ENCODE measurements at regions of chr21 and their contacts with region 1.

Region 1: DNA sequence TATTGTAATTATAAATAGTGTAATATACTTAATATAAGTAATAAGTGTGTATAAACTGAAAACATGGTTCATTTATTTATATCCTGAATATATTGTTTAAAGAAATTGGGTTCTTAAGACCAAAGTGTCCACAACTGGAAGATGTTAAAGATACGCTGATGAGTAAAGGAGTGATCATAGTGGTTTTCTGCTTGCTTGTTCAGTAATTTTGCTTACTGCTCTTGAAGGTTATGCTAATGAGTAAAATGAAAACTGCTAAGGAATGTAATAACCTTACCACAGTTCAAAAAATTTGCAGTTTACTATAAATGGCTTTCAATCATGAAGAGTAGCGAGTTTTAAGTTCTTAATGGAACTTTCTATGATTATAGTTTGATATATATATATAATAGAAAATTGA is 22.0 kb downstream of the DONSON start:
- DNase-seq: no peak
- H3K4me3 Mint-ChIP-seq: no peak overlapping the region
- H3K27ac Mint-ChIP-seq: no peak overlapping the region
- H3K4me1 Mint-ChIP-seq: peaks cover 38% of the 10 kb centered on the region
- H3K27me3 Mint-ChIP-seq: no peaks in the 10 kb centered on the region

Region 2: GRCh38 chr21:32930673-32931072 is 635.8 kb before region 1 on chr21:
- CTCF ChIA-PET with region 1: no interaction called
- intact Hi-C with region 1: no loop called
- DNase-seq: no peak
- H3K4me3 Mint-ChIP-seq: no peak overlapping the region
- H3K27ac Mint-ChIP-seq: no peak overlapping the region
- H3K4me1 Mint-ChIP-seq: peaks cover 36% of the 10 kb centered on the region
- H3K27me3 Mint-ChIP-seq: no peaks in the 10 kb centered on the region

Region 3: GRCh38 chr21:33522953-33523349 is 43.6 kb before region 1 on chr21:
- CTCF ChIA-PET with region 1: interaction called, 3 read pairs
- intact Hi-C with region 1: loop called (anchors 5 kb)
- DNase-seq: no peak
- H3K4me3 Mint-ChIP-seq: no peak overlapping the region
- H3K27ac Mint-ChIP-seq: no peak overlapping the region
- H3K4me1 Mint-ChIP-seq: no peaks in the 10 kb centered on the region
- H3K27me3 Mint-ChIP-seq: no peaks in the 10 kb centered on the region